Motor neuron (in vitro differentiated cells): ENCODE measurements at regions of chr21 and their contacts with region 1.

Region 1: GRCh38 chr21:27700974-27701614 is 734.2 kb upstream of the ADAMTS5 start:
- ATAC-seq: peak; percentile 82 to 98 (median 91)
- H3K4me3 ChIP-seq: peak overlapping the region in 2 of 5 donors; percentile 13 to 20
- H3K27ac ChIP-seq: no peak overlapping the region
- H3K4me1 ChIP-seq: peaks cover 0 to 2% of the 10 kb centered on the region in 2 donors

Region 2: GRCh38 chr21:26842976-26843932 is 857.8 kb before region 1 on chr21:
- in situ Hi-C with region 1: loop called in 1 of 9 experiments (anchors 10 kb)
- ATAC-seq: peak; percentile 38 to 64 (median 54)
- H3K4me3 ChIP-seq: peak overlapping the region; percentile 47 to 89 (median 75)
- H3K27ac ChIP-seq: peak overlapping the region; percentile 90
- H3K4me1 ChIP-seq: peaks cover 8% of the 10 kb centered on the region in 2 donors

Region 3: GRCh38 chr21:26850108-26850643 is 850.9 kb before region 1 on chr21:
- in situ Hi-C with region 1: loop called (anchors 5 to 25 kb)
- ATAC-seq: no peak
- H3K4me3 ChIP-seq: no peak overlapping the region
- H3K27ac ChIP-seq: no peak overlapping the region
- H3K4me1 ChIP-seq: peaks cover 2 to 6% of the 10 kb centered on the region in 2 donors

Region 4: GRCh38 chr21:27001526-27001925 is 699.6 kb before region 1 on chr21:
- in situ Hi-C with region 1: no loop called
- ATAC-seq: no peak
- H3K4me3 ChIP-seq: no peak overlapping the region
- H3K27ac ChIP-seq: no peak overlapping the region
- H3K4me1 ChIP-seq: no peaks in the 10 kb centered on the region

Region 5: DNA sequence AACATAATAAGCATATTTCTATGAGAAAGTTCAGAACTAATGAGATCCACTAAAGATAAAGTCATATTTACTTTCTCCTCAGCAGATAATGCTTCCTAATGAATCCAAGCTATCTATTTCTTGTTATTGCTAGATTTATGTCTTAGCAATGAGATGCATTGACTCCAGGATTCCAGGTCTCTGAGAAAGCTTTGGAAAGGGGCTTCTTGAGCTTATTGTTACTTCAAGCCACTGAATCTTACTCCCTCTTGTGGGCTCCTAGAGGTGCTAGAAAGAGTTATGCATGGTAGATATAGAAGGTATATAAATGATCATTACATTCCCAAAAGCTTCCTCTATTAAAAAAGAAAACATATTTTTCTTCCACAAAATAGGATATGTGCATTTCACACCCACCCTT is 487.8 kb before region 1 on chr21:
- in situ Hi-C with region 1: no loop called
- ATAC-seq: no peak
- H3K4me3 ChIP-seq: no peak overlapping the region
- H3K27ac ChIP-seq: no peak overlapping the region
- H3K4me1 ChIP-seq: no peaks in the 10 kb centered on the region

Region 6: DNA sequence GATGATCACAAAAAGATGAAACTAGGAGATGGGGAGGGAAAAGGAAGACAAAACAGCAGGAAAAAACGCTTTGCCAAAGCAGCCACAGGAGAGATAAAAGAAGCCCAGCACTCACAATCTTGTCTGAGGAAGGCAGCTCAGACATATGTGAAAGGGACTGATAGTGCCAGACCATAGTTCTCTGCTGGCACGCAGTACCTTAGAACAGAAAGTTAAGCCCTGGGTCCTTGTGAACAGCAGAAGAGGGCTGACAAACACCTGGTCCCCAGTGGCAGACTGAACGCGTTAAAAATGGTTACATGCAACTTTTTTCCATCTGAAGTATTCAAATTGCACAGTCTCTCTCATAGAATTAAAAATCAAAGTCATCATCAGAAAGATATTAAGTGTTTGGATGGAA is 301.0 kb before region 1 on chr21:
- in situ Hi-C with region 1: no loop called
- ATAC-seq: no peak
- H3K4me3 ChIP-seq: no peak overlapping the region
- H3K27ac ChIP-seq: no peak overlapping the region
- H3K4me1 ChIP-seq: no peaks in the 10 kb centered on the region

Region 7: DNA sequence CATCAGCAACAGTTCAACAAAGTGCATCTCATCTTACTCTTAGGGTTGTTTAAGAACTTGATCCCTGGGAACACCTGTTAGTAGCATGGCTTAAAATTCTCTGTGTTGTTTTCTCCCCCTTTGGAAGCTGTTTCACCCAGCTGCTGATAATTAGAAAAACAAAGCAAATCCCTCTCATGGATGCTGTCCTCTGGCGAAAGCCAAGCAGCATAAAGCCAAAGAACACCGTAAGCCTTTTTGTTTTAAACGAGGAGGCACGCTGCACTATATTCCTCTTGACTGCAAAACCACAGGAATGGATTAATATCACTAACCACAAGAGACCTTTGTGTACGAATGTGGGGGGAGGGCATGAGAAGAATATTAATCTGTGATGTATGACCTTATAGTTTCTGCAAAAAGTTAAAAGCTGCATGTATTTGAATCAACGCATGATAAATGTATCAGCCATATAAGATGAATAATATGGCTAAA is 368.4 kb after region 1 on chr21:
- in situ Hi-C with region 1: loop called in 1 of 9 experiments (anchors 25 kb)
- ATAC-seq: peak in 1 of 8 experiments; percentile 82
- H3K4me3 ChIP-seq: no peak overlapping the region
- H3K27ac ChIP-seq: no peak overlapping the region
- H3K4me1 ChIP-seq: peaks cover 0 to 3% of the 10 kb centered on the region in 2 donors